Activated CD8-positive, alpha-beta memory T cell treated with anti-CD3 and anti-CD28 coated beads, Interleukin-2, amount 10 ng/mL, durations not matched to agents 7 days and 5 days (primary cell): ENCODE measurements at regions of chr9 and their contacts with region 1.

Region 1: GRCh38 chr9:128688512-128689292 is at the start of gene SET:
- DNase-seq: peak; percentile 95
- ATAC-seq: peak; percentile 83
- H3K4me3 Mint-ChIP-seq: peak within 1 kb of the TSS; percentile 97
- H3K27ac Mint-ChIP-seq: peak within 1 kb of the TSS; percentile 99
- H3K4me1 Mint-ChIP-seq: peaks cover 67% of the 10 kb centered on the region
- H3K27me3 Mint-ChIP-seq: no peaks in the 10 kb centered on the region
- total RNA-seq, gene SET: 436 to 623 TPM

Region 2: DNA sequence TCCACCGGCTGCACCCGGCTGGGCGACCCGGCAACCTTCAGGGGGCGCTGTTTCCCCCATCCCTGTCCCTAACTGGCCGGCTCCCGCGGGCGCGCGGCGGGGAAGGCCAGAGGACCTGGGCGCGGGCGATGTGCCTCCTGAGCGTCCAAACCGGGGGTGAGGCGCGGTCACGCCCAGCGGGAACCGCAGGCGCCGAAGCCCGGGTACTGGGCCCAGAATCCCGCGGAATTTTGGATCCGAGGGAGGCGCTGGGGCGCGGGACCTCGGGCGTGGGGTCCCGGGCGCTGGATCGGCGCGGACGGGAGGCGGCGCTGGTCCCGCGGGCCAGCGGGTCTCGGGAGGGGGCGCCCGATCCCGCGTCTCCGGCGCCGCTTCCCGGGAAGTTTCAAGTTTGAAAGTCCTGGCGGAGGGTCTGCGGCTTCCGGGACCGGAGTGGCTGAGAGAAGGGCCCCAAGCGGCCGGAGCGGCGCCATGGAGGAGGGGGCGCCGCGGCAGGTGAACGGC is 13.8 kb after region 1 on chr9 and contains the start of gene PKN3:
- CTCF ChIA-PET with region 1: interaction called, 44 read pairs
- DNase-seq: peak; percentile 92
- ATAC-seq: peak; percentile 93
- H3K4me3 Mint-ChIP-seq: peak within 1 kb of the TSS; percentile 75
- H3K27ac Mint-ChIP-seq: peak within 1 kb of the TSS; percentile 59
- H3K4me1 Mint-ChIP-seq: peaks cover 12% of the 10 kb centered on the region
- H3K27me3 Mint-ChIP-seq: no peaks in the 10 kb centered on the region
- total RNA-seq, gene PKN3: 8.1 to 9.1 TPM